Activated T-helper 2 cell treated with anti-CD3 and anti-CD28 coated beads, Interferon-gamma antibody, Interleukin-2, Interleukin-4, amounts not matched to agents 10 μg/mL and 5 μg/mL and 100 μg/mL, durations not matched to agents 14 hours and 24 hours and 36 hours (primary cell): ENCODE measurements at regions of chr3 and their contacts with region 1.

Region 1: GRCh38 chr3:17258823-17259436 is 374.2 kb downstream of the PLCL2 start:
- DNase-seq: no peak
- H3K4me3 Mint-ChIP-seq: no peak overlapping the region
- H3K27ac Mint-ChIP-seq: no peak overlapping the region
- H3K4me1 Mint-ChIP-seq: no peaks in the 10 kb centered on the region
- H3K27me3 Mint-ChIP-seq: no peaks in the 10 kb centered on the region

Region 2: DNA sequence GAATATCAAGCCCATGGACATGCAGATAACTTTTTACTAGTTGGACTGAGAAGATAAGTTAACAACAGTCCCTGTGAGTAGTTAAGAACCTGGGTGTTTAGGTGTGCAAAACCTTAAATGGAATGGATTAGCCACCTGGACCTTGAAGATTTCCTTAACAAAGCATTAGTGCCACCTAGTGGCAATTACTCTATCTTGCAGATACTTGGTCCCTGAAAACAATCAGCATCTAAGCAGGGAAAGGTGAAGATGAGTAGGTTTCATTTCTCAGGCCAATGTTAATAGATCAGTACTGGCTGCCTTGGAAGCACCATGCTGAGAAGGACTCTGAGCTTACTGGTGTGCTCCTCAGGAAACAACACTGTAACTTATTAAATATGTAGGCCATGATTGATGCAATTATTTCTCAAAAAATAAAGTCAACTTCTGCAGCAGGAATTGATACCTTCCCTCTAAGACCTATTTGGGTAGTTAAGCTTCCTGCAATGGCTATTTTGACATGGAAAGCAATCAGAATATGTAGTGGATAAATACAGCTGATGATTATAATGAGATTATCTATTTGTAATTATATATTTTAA is 154.1 kb after region 1 on chr3:
- intact Hi-C with region 1: loop called (anchors 1 kb)
- DNase-seq: no peak
- H3K4me3 Mint-ChIP-seq: no peak overlapping the region
- H3K27ac Mint-ChIP-seq: no peak overlapping the region
- H3K4me1 Mint-ChIP-seq: no peaks in the 10 kb centered on the region
- H3K27me3 Mint-ChIP-seq: no peaks in the 10 kb centered on the region